AG04450 (cell line): ENCODE measurements at regions of chr9 and their contacts with region 1.

Region 1: GRCh38 chr9:96217754-96218693 is 84.0 kb downstream of the HSD17B3 start:
- DNase-seq: peak; percentile 11
- H3K4me3 ChIP-seq: peak overlapping the region; percentile 46
- H3K27ac ChIP-seq: no peak overlapping the region
- H3K27me3 ChIP-seq: peaks cover 34% of the 10 kb centered on the region
- CTCF ChIP-seq: peak; percentile 88

Region 2: DNA sequence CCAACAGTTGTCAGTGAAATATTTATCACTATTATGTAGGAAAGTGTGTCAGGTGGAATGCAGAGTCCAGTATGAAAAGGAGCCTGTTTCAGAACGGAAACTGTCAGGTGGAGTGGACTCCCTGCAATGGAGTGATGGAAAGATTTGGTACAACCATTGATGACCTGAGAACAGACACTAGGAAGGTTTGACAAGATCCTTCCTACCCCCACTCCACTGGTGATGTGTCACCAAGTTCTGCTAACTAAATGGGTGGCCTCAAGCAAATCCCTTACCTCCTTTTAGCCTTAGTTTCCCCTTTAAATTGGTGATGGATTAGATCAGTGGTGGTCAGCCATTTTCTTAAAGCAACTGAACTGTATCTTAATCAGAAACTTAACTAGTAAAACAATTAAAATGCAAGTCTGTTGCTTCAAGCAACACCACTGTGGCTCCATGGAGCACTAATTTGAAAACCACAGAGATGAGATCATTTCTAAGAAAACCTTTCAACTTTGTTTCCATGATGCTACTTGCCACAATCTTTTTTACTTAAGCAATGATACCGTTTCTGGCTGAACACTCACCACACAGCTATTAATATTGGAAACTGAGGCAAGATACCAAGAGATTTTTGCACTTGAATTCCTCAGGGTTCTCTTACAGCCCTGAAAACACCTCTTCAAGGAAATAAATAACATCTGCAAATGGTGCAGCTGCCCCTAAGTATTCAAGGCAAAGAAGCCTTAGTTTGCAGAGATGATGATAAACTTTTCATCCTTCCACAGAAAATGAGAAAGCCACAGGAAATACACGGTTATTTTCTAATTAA is 201.9 kb before region 1 on chr9:
- CTCF ChIA-PET with region 1: no interaction called
- POLR2A ChIA-PET with region 1: no interaction called
- DNase-seq: no peak
- H3K4me3 ChIP-seq: no peak overlapping the region
- H3K27ac ChIP-seq: no peak overlapping the region
- H3K27me3 ChIP-seq: peaks cover 10% of the 10 kb centered on the region
- CTCF ChIP-seq: no peak

Region 3: GRCh38 chr9:96169484-96169883 is 48.5 kb before region 1 on chr9:
- CTCF ChIA-PET with region 1: no interaction called
- POLR2A ChIA-PET with region 1: no interaction called
- DNase-seq: no peak
- H3K4me3 ChIP-seq: no peak overlapping the region
- H3K27ac ChIP-seq: no peak overlapping the region
- H3K27me3 ChIP-seq: peaks cover 33% of the 10 kb centered on the region
- CTCF ChIP-seq: no peak

Region 4: GRCh38 chr9:96279960-96280359 is 61.9 kb after region 1 on chr9:
- CTCF ChIA-PET with region 1: interaction called, 11 read pairs
- POLR2A ChIA-PET with region 1: no interaction called
- DNase-seq: no peak
- H3K4me3 ChIP-seq: no peak overlapping the region
- H3K27ac ChIP-seq: no peak overlapping the region
- H3K27me3 ChIP-seq: peaks cover 2% of the 10 kb centered on the region
- CTCF ChIP-seq: no peak